ENCODE measurements at regions of chr17 and their contacts with region 1.

Region 1: GRCh38 chr17:60421273-60421934 is 885 bp upstream of the CHCT1 start:
- DNase-seq: peak in 9 of 10 donors; percentile 45 to 72 (median 56)
- H3K4me3 ChIP-seq: peak overlapping the region; percentile 35 to 78 (median 59)
- H3K27ac ChIP-seq: peak overlapping the region in 49 of 59 donors; percentile 7 to 88 (median 62)
- H3K27me3 ChIP-seq: peaks cover 0 to 5% (median 0%) of the 10 kb centered on the region in 45 donors
- CTCF ChIP-seq: peak; percentile 50 to 99 (median 91)

Region 2: DNA sequence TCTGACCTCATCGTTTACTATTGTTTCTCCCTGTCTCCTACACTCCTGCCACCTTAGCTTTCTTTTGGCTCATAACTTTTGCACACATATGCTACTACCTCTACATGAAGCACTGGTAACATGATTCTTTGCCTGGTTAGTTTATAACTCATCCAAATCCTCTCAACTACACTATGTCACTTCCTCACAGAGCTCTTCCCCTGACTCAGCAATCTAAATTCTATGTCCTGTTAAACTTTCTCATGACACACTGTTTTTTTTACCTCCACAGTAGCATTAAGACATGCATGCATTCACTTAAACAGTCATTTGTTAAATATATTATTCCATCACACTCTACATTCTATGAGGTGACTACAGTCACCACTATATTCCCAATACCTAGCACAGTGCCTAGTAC is 84.9 kb after region 1 on chr17:
- intact Hi-C with region 1: no loop called
- DNase-seq: no peak
- H3K4me3 ChIP-seq: no peak overlapping the region
- H3K27ac ChIP-seq: peak overlapping the region in 3 of 59 donors; percentile 9 to 28 (median 10)
- H3K27me3 ChIP-seq: no peaks in the 10 kb centered on the region
- CTCF ChIP-seq: no peak

Region 3: DNA sequence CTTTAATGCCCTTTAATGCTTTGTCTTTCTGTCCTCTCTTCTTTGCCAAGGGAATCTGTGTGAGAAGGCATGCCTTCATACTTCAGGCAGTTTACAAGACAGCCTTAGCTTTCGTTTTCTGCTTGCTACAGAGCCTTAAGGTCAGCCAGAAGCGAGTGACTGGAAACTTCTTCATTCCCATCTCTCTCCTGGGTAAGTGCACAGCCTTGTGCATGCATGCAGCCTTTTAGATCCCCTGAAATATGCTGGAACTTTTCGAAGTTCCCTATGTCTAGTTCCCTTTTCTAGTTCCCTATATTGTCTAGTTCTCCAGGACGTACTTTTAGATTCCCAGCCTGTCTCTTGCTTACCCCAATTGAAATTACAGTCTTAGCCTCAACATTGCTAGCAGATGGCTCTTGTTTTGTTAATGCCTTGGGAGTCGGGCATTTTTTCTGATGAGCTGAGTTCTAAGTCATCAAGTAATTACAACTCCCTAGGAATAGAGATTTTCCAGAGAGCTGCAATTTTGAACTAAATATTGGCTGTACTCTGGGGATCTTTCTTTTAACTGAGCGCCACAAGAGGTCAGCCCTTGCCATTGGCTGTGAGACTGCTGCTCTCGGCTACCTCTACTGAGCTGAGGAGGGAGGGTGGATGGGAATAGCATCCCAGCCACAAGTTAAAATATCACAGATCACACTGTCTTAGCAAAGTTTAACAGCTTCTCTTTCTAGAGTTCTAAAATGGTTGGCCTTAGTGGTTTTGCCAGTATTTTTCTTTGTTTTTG is 155.9 kb after region 1 on chr17:
- intact Hi-C with region 1: loop called (anchors 5 to 10 kb)
- DNase-seq: peak in 6 of 10 donors; percentile 30 to 57 (median 46)
- H3K4me3 ChIP-seq: peak overlapping the region in 57 of 59 donors; percentile 0 to 60 (median 41)
- H3K27ac ChIP-seq: peak overlapping the region in 49 of 59 donors; percentile 3 to 82 (median 55)
- H3K27me3 ChIP-seq: no peaks in the 10 kb centered on the region
- CTCF ChIP-seq: peak in 54 of 56 donors; percentile 21 to 79 (median 55)

Region 4: GRCh38 chr17:60630352-60630751 is 208.9 kb after region 1 on chr17:
- intact Hi-C with region 1: loop called (anchors 5 to 10 kb)
- DNase-seq: peak in 5 of 10 donors; percentile 34 to 90 (median 53)
- H3K4me3 ChIP-seq: no peak overlapping the region
- H3K27ac ChIP-seq: peak overlapping the region in 55 of 59 donors; percentile 0 to 91 (median 69)
- H3K27me3 ChIP-seq: no peaks in the 10 kb centered on the region
- CTCF ChIP-seq: no peak

Region 5: DNA sequence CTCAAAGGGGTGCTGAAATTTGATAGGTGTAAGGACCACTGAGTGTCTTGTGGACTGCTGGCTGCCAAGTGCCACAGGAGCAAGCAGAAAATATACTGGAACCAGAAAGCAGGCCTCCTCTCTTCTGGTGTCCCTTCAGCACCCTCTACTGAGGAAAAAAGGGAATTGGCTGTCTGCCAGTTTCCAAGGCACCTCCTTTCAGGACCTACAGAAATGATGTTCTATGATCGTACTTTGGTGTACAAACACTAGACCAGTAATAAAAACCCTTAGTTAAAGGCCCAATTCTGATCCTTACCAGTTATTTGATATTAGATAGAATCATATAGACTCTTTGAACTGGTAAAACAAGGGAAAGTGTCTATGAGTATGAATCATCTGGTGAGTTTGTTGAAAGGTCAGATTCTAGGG is 220.4 kb after region 1 on chr17:
- intact Hi-C with region 1: loop called (anchors 5 to 10 kb)
- DNase-seq: peak in 8 of 10 donors; percentile 39 to 77 (median 56)
- H3K4me3 ChIP-seq: no peak overlapping the region
- H3K27ac ChIP-seq: peak overlapping the region in 51 of 59 donors; percentile 7 to 81 (median 53)
- H3K27me3 ChIP-seq: no peaks in the 10 kb centered on the region
- CTCF ChIP-seq: peak in 55 of 56 donors; percentile 24 to 84 (median 63)